ENCODE measurements at regions of chr2 and their contacts with region 1.

Region 1: DNA sequence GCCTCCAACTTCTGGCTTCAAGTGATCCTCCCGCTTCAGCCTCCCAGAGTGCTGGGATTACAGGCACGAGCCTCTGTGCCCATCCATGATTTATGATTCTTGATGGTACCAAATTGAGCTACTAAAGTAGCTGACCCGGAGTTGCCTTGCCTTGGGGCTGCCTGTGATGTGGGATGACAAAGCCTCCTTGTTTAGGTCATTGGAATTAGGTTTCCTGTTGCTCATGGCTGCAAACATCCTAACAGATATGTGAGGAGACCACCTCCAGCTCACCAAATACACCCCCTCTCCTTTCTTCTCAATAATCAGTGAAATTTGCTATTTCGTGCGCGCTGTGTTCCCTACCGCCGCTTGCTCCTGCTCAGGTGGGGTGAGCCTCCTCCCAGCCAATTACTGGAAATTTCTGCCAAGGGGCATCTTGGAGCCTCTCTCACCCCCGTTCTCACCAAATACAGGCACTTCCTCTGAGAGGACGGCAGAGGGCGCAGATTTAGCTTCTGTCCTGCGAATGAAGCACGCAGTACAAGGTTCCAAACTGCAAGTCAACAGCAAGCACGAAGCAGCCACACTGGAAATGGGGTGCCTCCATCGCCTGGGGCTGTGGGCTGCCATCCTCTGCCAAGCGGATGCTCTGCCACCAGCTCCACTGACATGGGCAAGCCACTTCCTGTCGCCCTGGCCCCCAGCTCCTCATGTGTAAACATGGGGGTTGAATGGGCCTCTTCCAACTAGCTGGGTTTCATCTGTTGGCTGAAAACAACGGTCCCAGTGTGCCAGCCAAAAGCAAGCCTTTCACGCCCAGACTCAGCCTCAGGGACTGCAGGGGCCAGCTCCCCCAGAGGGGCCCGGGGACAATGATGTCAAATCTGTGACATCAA is 71.7 kb downstream of the NCAPH start:
- ATAC-seq: peak; percentile 71 to 93 (median 80)
- H3K4me3 ChIP-seq: no peak overlapping the region
- H3K27ac ChIP-seq: no peak overlapping the region
- H3K4me1 ChIP-seq: no peaks in the 10 kb centered on the region

Region 2: GRCh38 chr2:96305091-96305978 is 101.9 kb before region 1 on chr2 and contains the start of gene SNRNP200:
- in situ Hi-C with region 1: loop called in 1 of 9 experiments (anchors 25 kb)
- ATAC-seq: peak; percentile 95 to 99 (median 98)
- H3K4me3 ChIP-seq: peak within 1 kb of the TSS; percentile 57 to 99 (median 83)
- H3K27ac ChIP-seq: peak within 1 kb of the TSS; percentile 84 to 97
- H3K4me1 ChIP-seq: peaks cover 11 to 15% of the 10 kb centered on the region in 2 donors
- total RNA-seq, gene SNRNP200: 50.1 to 150 (median 97.9) TPM

Region 3: DNA sequence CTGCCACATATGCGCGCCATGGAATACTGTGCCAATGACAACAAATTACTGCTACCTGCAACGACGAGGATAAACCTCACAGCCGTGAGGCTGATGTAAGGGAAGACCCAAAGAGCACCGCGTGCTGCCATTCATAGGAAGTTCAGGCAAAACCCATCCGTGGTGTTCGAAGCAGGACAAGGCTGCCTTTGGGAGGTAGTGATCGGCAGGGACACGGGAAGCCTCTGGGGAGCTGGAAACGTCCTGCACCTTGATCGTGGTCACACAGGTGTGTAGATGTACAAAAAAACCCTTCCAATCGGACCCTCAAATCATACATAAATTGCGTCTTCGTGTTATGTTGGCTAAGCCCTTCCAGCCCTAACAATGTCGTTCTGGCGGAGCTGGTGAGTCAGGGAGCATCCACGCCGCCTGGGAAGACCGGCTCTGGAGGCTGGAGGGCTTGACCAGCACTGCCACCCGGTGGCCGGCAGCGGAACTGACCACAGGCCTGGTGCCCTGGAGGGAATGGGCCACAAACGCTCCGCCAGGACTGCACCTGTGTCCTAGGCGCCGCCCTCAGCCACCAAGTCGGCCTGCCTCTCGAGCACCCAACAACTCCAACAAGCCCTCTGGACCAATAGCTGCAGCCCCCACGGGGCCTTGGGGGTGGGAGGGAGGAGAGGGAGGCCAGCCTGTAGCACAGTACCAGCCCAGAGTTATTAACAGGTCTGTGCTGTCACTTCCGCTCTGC is 102.0 kb after region 1 on chr2:
- in situ Hi-C with region 1: loop called in 4 of 9 experiments (anchors 10 to 25 kb)
- ATAC-seq: peak; percentile 80 to 96 (median 90)
- H3K4me3 ChIP-seq: peak overlapping the region in 1 of 5 donors; percentile 10
- H3K27ac ChIP-seq: no peak overlapping the region
- H3K4me1 ChIP-seq: peaks cover 0 to 3% of the 10 kb centered on the region in 2 donors

Region 4: GRCh38 chr2:96702098-96702785 is 295.0 kb after region 1 on chr2:
- in situ Hi-C with region 1: no loop called
- ATAC-seq: no peak
- H3K4me3 ChIP-seq: no peak overlapping the region
- H3K27ac ChIP-seq: no peak overlapping the region
- H3K4me1 ChIP-seq: no peaks in the 10 kb centered on the region

Measured in motor neuron (in vitro differentiated cells).